ENCODE measurements at regions of chr6 and their contacts with region 1.

Region 1: DNA sequence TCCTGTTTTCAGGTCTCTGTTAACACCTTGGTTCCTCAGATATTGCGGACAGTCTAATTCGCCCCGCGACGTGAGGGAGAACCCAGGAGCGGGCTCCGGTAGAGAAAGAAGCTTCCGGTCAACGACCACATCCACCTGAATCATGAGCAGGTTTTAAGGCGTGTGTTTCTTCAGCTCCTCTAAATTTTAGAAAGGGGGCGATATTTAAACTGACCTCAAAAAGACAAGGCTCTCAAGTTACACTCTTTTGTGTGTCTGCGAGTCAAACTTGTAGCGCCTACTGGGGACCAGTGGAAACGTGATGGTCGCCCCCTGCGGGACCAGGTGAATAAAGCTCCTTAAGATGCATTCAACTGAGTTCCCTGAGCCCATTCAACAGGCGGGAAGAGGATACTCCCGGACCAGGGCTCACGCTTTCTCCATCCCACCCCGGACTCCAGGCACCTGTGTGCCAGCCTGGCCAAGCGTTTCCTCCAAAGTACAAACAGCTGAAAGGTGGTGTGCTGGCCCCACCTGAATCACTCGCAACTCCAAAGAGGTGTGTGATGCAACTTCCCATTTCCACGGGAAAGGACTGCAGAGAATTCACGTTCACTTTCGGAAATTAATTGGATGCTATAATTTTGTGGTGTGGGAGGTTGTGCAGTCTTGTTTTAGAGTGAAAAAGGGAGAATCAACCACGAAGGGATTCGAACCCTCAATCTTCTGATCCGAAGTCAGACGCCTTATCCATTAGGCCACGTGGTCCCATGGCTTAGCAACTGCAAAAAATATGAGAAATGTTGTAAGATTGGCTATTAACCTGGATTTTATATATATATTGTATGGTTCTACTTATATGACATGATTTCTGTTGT is 17.0 kb downstream of the GPX5 start:
- DNase-seq: peak; percentile 90 to 98 (median 92)
- ATAC-seq: peak; percentile 95
- H3K4me3 ChIP-seq: peak overlapping the region; percentile 49
- H3K27ac ChIP-seq: peak overlapping the region; percentile 88
- H3K4me1 ChIP-seq: peaks cover 19 to 30% of the 10 kb centered on the region in 2 experiments
- H3K27me3 ChIP-seq: no peaks in the 10 kb centered on the region
- CTCF ChIP-seq: peak; percentile 98 to 99 (median 99)
- EP300 ChIP-seq: peak; percentile 67
- POLR2A ChIP-seq: no peak
- RAD21 ChIP-seq: peak; percentile 89 to 90

Region 2: GRCh38 chr6:28399350-28400121 is 143.1 kb before region 1 on chr6 and contains the start of gene ZSCAN12:
- CTCF ChIA-PET with region 1: no interaction called
- POLR2A ChIA-PET with region 1: interaction called, 8 read pairs
- in situ Hi-C with region 1: no loop called
- intact Hi-C with region 1: loop called (anchors 1 kb)
- DNase-seq: peak; percentile 90 to 99 (median 91)
- ATAC-seq: peak; percentile 88
- H3K4me3 ChIP-seq: peak within 1 kb of the TSS; percentile 61
- H3K27ac ChIP-seq: peak within 1 kb of the TSS; percentile 80
- H3K4me1 ChIP-seq: peaks cover 21 to 36% of the 10 kb centered on the region in 2 experiments
- H3K27me3 ChIP-seq: no peaks in the 10 kb centered on the region
- CTCF ChIP-seq: peak; percentile 74 to 82 (median 79)
- EP300 ChIP-seq: peak; percentile 74
- POLR2A ChIP-seq: peak; percentile 97
- RAD21 ChIP-seq: peak; percentile 37 to 47
- polyA plus RNA-seq, gene ZSCAN12: 2.5 to 7.9 TPM

Region 3: DNA sequence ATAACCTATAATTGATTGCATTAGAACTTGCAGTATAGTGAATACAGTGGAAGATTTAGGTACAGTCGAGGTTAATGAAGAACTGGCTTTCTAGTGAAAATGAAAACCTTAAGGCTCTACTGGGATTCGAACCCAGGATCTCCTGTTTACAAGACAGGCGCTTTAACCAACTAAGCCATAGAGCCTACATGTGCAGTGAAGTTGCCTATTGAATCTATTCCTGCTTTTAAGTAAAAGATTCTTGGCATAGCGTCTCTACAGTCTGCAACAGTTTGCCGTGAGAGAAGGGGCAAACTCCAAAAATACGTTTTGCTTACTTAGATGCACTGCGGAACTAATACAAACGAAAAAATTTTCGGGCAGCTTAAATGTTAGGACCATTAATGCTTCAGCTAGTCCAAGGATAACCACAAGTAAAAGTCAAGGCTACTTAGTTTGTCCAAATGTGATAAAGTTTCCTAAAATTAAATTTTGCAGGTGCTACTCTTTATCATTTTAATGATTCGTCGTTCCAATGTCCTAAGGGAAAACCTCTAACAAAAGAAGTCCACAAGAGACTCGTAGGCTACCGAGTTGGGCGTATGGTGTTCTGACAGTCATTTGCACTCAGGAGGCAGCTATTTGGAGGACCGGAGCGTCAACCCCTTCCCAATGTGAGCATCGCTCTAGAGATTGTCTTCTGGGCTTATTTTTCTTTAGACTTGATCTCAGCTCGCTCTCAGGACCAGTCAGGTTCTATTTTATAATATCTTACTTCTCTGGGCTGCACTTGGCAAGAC is 68.0 kb before region 1 on chr6:
- CTCF ChIA-PET with region 1: no interaction called
- POLR2A ChIA-PET with region 1: interaction called, 5 read pairs
- in situ Hi-C with region 1: no loop called
- intact Hi-C with region 1: loop called (anchors 2 kb)
- DNase-seq: peak; percentile 64 to 93 (median 76)
- ATAC-seq: peak; percentile 96
- H3K4me3 ChIP-seq: peak overlapping the region; percentile 55
- H3K27ac ChIP-seq: peak overlapping the region; percentile 2; the same call in 1 of the 3 replicates
- H3K4me1 ChIP-seq: no peaks in the 10 kb centered on the region; a peak in 2 of 5 replicates
- H3K27me3 ChIP-seq: no peaks in the 10 kb centered on the region
- CTCF ChIP-seq: peak in 1 of 3 experiments; percentile 13; a peak in 1 of 6 replicates
- EP300 ChIP-seq: peak; percentile 87
- POLR2A ChIP-seq: peak; percentile 59
- RAD21 ChIP-seq: no peak; a peak in 2 of 4 replicates

Region 4: GRCh38 chr6:28496099-28496779 is 46.4 kb before region 1 on chr6:
- CTCF ChIA-PET with region 1: no interaction called
- POLR2A ChIA-PET with region 1: no interaction called
- in situ Hi-C with region 1: no loop called
- intact Hi-C with region 1: loop called (anchors 2 kb)
- DNase-seq: no peak
- ATAC-seq: peak; percentile 49; the same call in 2 of the 3 replicates
- H3K4me3 ChIP-seq: no peak overlapping the region
- H3K27ac ChIP-seq: no peak overlapping the region
- H3K4me1 ChIP-seq: peaks cover 0 to 11% of the 10 kb centered on the region in 2 experiments; a peak in 3 of 5 replicates
- H3K27me3 ChIP-seq: no peaks in the 10 kb centered on the region
- CTCF ChIP-seq: peak; percentile 32 to 74 (median 37); a peak in 3 of 6 replicates
- EP300 ChIP-seq: no peak
- POLR2A ChIP-seq: no peak
- RAD21 ChIP-seq: peak; percentile 87 to 88

Region 5: DNA sequence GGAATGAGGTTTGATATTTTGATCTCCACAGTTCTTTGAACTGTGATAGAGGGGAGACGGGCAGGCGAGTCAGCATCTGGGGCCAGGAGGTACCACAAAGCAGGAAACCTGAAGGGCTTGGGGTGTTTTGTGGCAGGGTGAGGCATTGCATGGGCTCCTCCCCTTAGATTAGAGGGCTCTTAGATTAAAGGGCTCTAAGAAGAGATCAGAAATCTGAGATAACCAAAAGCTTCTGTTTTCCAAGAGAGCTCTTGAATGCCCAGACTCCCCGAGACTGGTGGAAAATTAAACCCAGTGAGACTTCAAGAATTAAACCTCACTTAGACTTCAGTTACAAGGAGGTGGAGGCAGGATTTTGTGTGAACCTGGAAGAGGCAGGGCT is 19.4 kb before region 1 on chr6:
- CTCF ChIA-PET with region 1: no interaction called
- POLR2A ChIA-PET with region 1: interaction called, 14 read pairs
- in situ Hi-C with region 1: no loop called
- intact Hi-C with region 1: no loop called
- DNase-seq: peak; percentile 23 to 56 (median 44)
- ATAC-seq: peak; percentile 61
- H3K4me3 ChIP-seq: no peak overlapping the region
- H3K27ac ChIP-seq: no peak overlapping the region
- H3K4me1 ChIP-seq: peaks cover 6 to 16% of the 10 kb centered on the region in 2 experiments; a peak in 4 of 5 replicates
- H3K27me3 ChIP-seq: no peaks in the 10 kb centered on the region; a peak in 1 of 5 replicates
- CTCF ChIP-seq: no peak
- EP300 ChIP-seq: no peak
- POLR2A ChIP-seq: no peak
- RAD21 ChIP-seq: no peak

Region 6: GRCh38 chr6:28553986-28554881 is 11.6 kb after region 1 on chr6:
- CTCF ChIA-PET with region 1: no interaction called
- POLR2A ChIA-PET with region 1: interaction called, 17 read pairs
- in situ Hi-C with region 1: no loop called
- intact Hi-C with region 1: no loop called
- DNase-seq: peak; percentile 37 to 92 (median 62)
- ATAC-seq: peak; percentile 88
- H3K4me3 ChIP-seq: peak overlapping the region; percentile 11; the same call in 1 of the 2 replicates
- H3K27ac ChIP-seq: peak overlapping the region; percentile 80
- H3K4me1 ChIP-seq: peaks cover 20 to 32% of the 10 kb centered on the region in 2 experiments
- H3K27me3 ChIP-seq: no peaks in the 10 kb centered on the region
- CTCF ChIP-seq: no peak
- EP300 ChIP-seq: peak; percentile 77
- POLR2A ChIP-seq: no peak
- RAD21 ChIP-seq: no peak

Region 7: DNA sequence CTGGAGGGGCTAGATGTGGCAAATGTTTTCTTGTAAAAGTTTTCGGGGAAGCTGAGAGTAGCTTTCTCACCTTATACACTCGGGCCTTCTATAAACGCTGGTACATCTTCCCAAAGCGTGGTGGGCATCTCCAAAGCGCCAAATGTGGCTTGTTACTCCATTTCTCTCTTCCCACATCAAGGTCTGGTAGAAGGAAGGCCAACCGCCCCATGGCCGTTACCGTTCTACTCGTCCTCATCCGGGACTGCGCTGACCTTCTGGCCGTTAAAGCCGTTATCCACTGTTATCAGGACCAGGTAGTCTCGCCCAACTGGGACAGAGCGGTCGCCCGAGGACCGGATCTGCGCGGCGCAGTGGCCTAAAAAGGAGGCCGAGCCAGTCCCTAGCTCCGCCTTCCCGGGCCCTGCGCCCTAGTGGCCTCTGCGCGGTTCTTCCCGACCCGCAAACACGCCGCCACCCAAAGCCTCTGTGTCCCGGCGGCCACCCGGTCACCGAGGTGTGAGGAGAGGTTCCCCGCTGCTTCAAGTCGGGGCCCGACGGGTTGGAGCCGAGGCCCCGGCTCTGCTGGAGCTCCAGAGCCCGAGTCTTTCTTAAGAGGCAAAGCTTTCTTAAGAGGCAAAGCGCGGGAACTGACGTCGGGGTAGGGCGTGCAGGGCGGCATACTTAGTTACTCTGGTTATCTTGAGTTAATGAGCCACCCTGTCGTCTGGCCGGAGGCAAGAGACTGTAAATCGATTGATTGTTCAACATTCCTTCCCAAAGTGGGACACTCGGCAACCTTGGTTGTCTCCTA is 73.5 kb after region 1 on chr6:
- CTCF ChIA-PET with region 1: no interaction called
- POLR2A ChIA-PET with region 1: interaction called, 8 read pairs
- in situ Hi-C with region 1: no loop called
- intact Hi-C with region 1: loop called (anchors 2 kb)
- DNase-seq: peak; percentile 92 to 98 (median 94)
- ATAC-seq: peak; percentile 91
- H3K4me3 ChIP-seq: peak overlapping the region; percentile 44
- H3K27ac ChIP-seq: peak overlapping the region; percentile 86
- H3K4me1 ChIP-seq: peaks cover 13 to 22% of the 10 kb centered on the region in 2 experiments; a peak in 4 of 5 replicates
- H3K27me3 ChIP-seq: no peaks in the 10 kb centered on the region
- CTCF ChIP-seq: peak; percentile 28 to 33 (median 29); a peak in 3 of 6 replicates
- EP300 ChIP-seq: peak; percentile 98
- POLR2A ChIP-seq: peak; percentile 97
- RAD21 ChIP-seq: no peak; a peak in 1 of 4 replicates